PC-9 (cell line): ENCODE measurements at regions of chr14 and their contacts with region 1.

Region 1: GRCh38 chr14:38316922-38317321 is 61.0 kb upstream of the CLEC14A start:
- DNase-seq: no peak
- H3K4me3 ChIP-seq: no peak overlapping the region
- H3K27ac ChIP-seq: no peak overlapping the region
- H3K4me1 ChIP-seq: no peaks in the 10 kb centered on the region
- H3K27me3 ChIP-seq: no peaks in the 10 kb centered on the region
- CTCF ChIP-seq: no peak

Region 2: DNA sequence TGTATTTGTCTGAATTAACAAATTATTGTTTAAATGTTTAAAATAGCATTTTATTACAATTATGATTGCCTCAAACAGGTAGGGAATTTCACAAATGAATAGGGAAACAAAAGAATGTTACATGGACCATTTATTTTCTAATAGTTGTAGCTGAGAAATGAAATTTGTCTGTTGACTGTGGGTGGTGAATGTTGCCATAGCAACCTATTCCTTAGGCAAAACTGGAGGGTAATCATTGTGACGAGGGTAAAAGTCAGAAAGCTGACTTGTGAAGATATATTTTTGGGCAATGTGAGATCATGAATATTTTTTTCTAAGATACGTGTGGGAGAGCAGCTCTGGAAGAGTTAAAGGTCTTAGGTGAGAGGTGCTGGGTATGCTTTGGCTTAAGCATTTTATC is 36.8 kb before region 1 on chr14:
- CTCF ChIA-PET with region 1: no interaction called
- POLR2A ChIA-PET with region 1: no interaction called
- intact Hi-C with region 1: no loop called
- DNase-seq: no peak
- H3K4me3 ChIP-seq: no peak overlapping the region
- H3K27ac ChIP-seq: no peak overlapping the region
- H3K4me1 ChIP-seq: no peaks in the 10 kb centered on the region
- H3K27me3 ChIP-seq: no peaks in the 10 kb centered on the region
- CTCF ChIP-seq: no peak

Region 3: DNA sequence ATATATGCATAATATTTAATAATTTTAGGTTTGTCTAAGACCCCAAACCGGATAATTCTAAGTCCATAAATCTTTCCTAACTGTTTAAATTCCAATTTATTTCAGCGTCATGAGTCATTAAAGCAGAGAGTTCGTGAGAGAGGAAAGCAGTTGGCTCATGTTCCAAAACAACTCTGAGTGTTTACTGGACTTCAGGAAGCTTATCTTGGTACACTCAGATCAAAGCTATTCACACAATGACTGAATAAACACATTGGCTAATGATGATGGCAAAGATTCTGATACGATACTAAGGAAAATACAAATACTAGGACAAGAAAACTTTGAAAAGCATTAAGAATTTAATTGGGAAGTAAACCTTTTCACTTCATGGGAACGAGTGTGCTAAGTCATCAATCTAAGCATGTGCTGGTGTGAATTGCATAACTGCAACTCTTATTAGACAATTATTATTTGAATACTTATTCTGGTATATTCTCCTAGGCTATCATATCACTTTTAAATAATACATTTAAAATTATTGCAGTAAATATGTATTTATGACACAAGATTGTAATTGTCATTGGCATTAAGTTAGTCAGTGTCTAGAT is 26.2 kb before region 1 on chr14:
- CTCF ChIA-PET with region 1: no interaction called
- POLR2A ChIA-PET with region 1: interaction called, 13 read pairs
- intact Hi-C with region 1: no loop called
- DNase-seq: peak in 1 of 2 experiments; percentile 87
- H3K4me3 ChIP-seq: no peak overlapping the region
- H3K27ac ChIP-seq: peak overlapping the region; percentile 75
- H3K4me1 ChIP-seq: peaks cover 18% of the 10 kb centered on the region
- H3K27me3 ChIP-seq: no peaks in the 10 kb centered on the region
- CTCF ChIP-seq: no peak